Common myeloid progenitor, CD34-positive (primary cell): ENCODE measurements at regions of chr15 and their contacts with region 1.

Region 1: DNA sequence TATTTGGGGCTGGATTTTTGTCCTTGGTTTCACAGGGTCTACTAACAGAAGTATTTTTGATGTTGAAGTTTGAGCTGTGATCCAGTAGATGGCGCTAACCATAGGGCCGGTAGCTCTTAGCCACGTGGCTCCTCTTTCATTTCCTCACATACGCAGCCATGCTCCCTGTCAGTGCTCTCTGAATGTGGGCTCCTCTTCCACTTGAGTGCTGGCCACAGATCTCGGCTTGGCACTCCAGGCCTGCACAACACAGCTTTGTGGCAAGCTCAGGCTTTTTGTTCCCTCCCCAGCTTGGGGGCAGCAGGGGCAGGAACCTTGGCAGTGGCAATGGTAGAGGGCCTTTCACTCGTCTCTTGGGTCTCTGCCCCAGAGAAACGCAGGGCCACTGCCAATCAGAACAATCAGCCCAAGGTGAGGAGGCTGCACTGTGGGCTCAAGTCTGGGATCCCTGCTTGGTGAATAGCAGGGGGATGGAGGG is 18.6 kb upstream of the DNAAF4 start:
- DNase-seq: peak; percentile 48 to 66 (median 64)
- H3K4me3 ChIP-seq: no peak overlapping the region
- H3K27ac ChIP-seq: no peak overlapping the region
- H3K4me1 ChIP-seq: peaks cover 0 to 3% (median 0%) of the 10 kb centered on the region in 4 experiments
- H3K27me3 ChIP-seq: peaks cover 0 to 3% (median 0%) of the 10 kb centered on the region in 5 experiments

Region 2: DNA sequence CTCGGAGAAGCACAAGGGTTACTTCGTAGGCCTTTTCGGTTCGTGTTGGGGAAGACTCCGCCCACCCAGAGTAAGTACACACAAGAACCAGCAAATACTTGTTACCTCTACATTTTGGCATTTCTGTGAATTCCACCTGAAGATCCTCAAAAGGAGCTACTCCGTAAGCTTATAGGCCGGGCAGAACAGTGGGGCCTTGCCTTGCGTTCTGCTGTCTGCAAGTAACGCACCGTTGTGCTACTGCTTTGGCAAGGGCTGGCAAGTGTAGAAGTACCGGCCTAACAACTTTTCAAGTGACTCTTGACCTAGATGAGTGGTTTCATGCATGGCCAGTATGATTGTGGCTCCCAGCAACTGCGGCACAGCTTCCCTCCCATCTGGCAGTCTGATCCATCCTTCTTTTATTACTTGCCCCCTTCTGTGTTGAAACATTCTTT is 12.2 kb before region 1 on chr15:
- CTCF ChIA-PET with region 1: interaction called, 23 read pairs
- POLR2A ChIA-PET with region 1: no interaction called
- DNase-seq: no peak
- H3K4me3 ChIP-seq: no peak overlapping the region
- H3K27ac ChIP-seq: no peak overlapping the region
- H3K4me1 ChIP-seq: no peaks in the 10 kb centered on the region
- H3K27me3 ChIP-seq: no peaks in the 10 kb centered on the region

Region 3: DNA sequence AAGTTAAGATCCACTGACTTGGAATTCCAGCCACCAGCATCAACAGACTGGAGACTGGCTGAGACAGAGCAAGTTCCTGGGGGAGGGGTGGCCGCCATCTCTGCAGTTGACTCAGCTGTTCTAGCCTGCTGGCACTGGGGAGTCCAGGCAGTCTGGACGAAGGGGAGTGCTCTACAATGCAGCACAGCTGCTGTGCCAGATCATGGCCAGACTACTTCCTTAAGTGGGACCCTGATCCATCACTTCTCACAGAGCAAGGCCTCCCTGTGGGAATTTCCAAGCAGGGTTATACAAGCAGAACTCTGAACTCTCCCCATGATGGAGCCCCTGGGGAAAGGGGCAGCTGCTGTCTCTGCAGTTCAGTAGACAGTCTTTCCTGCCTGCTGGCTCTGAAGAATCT is 26.3 kb after region 1 on chr15:
- CTCF ChIA-PET with region 1: no interaction called
- POLR2A ChIA-PET with region 1: no interaction called
- DNase-seq: peak in 2 of 3 donors; percentile 20 to 27
- H3K4me3 ChIP-seq: no peak overlapping the region
- H3K27ac ChIP-seq: no peak overlapping the region
- H3K4me1 ChIP-seq: peaks cover 0 to 8% (median 6%) of the 10 kb centered on the region in 4 experiments
- H3K27me3 ChIP-seq: peaks cover 0 to 5% (median 0%) of the 10 kb centered on the region in 5 experiments

Region 4: GRCh38 chr15:55564347-55565145 is 37.9 kb after region 1 on chr15:
- CTCF ChIA-PET with region 1: no interaction called
- POLR2A ChIA-PET with region 1: no interaction called
- DNase-seq: no peak
- H3K4me3 ChIP-seq: no peak overlapping the region
- H3K27ac ChIP-seq: no peak overlapping the region
- H3K4me1 ChIP-seq: no peaks in the 10 kb centered on the region
- H3K27me3 ChIP-seq: no peaks in the 10 kb centered on the region

Region 5: GRCh38 chr15:55619783-55620182 is 93.2 kb after region 1 on chr15:
- CTCF ChIA-PET with region 1: no interaction called
- POLR2A ChIA-PET with region 1: no interaction called
- DNase-seq: peak in 2 of 3 donors; percentile 46 to 67
- H3K4me3 ChIP-seq: no peak overlapping the region
- H3K27ac ChIP-seq: no peak overlapping the region
- H3K4me1 ChIP-seq: no peaks in the 10 kb centered on the region
- H3K27me3 ChIP-seq: peaks cover 0 to 3% (median 0%) of the 10 kb centered on the region in 5 experiments

Region 6: GRCh38 chr15:55721554-55722185 is 195.1 kb after region 1 on chr15:
- CTCF ChIA-PET with region 1: no interaction called
- POLR2A ChIA-PET with region 1: no interaction called
- DNase-seq: no peak
- H3K4me3 ChIP-seq: no peak overlapping the region
- H3K27ac ChIP-seq: no peak overlapping the region
- H3K4me1 ChIP-seq: no peaks in the 10 kb centered on the region
- H3K27me3 ChIP-seq: no peaks in the 10 kb centered on the region